H1 (cell line): ENCODE measurements at regions of chr18 and their contacts with region 1.

Region 1: DNA sequence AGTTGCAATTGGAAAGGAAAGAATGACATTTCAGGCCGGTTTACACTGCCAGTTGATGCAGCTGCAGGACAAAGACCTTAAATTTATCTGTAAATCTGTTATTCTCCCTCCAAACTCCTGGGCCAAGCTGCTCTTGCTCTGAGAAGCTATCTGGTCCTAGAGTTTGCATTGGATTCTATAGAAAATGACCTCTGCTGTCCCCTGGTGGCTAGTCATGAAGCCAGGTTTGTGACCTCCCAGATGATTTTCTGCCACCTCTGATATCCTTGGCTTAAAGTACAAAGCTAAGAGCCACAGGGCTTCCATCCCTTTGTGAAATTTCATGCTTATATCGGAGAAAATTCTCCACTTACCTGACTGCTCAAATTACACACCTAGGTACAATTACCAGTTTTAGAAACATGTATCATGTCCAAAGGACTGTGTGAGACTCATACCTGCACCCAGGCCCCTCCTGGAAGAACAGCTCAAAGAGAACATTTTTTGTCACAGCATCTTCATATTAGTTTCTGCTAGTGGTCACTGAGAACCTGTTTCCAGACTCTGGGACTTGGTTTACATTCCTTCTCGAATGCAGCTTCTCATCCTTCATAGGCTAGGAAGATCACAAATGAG is 28.9 kb upstream of the IER3IP1 start:
- DNase-seq: peak in 1 of 2 experiments; percentile 66
- H3K4me3 ChIP-seq: no peak overlapping the region
- H3K27ac ChIP-seq: no peak overlapping the region
- H3K4me1 ChIP-seq: peaks cover 0 to 4% (median 0%) of the 10 kb centered on the region in 4 experiments; a peak in 3 of 7 replicates
- H3K27me3 ChIP-seq: no peaks in the 10 kb centered on the region
- CTCF ChIP-seq: peak; percentile 47 to 91 (median 85)
- EP300 ChIP-seq: no peak
- POLR2A ChIP-seq: no peak
- RAD21 ChIP-seq: peak; percentile 80 to 84

Region 2: GRCh38 chr18:47087676-47088075 is 117.3 kb before region 1 on chr18:
- CTCF ChIA-PET with region 1: interaction called, 13 read pairs
- POLR2A ChIA-PET with region 1: no interaction called
- DNase-seq: no peak
- H3K4me3 ChIP-seq: no peak overlapping the region
- H3K27ac ChIP-seq: no peak overlapping the region
- H3K4me1 ChIP-seq: peaks cover 0 to 2% (median 0%) of the 10 kb centered on the region in 4 experiments; a peak in 2 of 7 replicates
- H3K27me3 ChIP-seq: no peaks in the 10 kb centered on the region
- CTCF ChIP-seq: no peak
- EP300 ChIP-seq: no peak
- POLR2A ChIP-seq: no peak
- RAD21 ChIP-seq: no peak

Region 3: DNA sequence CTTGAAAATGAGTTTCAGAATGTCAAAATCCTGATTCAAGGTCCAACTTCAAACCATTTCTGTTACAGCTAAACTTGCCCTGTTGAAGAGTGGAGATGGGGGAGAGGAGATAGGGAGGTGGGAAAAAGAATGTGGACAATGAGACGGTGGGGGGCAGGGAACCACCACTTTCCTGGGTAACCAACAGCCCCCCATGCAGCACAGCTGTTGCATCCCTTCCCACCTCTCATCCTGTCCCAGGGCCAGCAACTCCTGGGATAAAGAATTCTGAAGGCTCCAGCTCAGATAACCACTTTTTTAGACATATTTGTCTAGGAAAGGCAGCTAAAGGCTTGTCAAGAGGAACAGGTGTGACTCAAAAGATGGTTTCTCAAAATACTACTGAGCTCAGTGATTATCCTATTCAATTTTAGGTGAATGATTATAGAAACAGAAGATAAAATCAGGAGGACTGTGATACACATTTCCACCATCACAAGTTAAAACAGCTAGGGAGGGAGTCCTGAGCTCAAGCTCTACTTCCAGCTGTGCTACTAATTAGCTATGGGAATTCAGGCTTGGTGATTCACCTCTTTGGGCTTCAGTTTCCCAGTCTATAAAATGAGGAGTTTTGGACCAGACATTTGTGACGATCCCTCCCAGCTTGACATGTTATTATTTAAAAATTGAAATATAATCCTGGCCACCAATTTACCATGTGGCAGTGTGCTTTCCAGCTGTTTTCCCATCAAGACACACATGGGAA is 91.0 kb before region 1 on chr18:
- CTCF ChIA-PET with region 1: interaction called, 27 read pairs
- POLR2A ChIA-PET with region 1: no interaction called
- DNase-seq: no peak
- H3K4me3 ChIP-seq: no peak overlapping the region
- H3K27ac ChIP-seq: no peak overlapping the region
- H3K4me1 ChIP-seq: peaks cover 5 to 23% (median 12%) of the 10 kb centered on the region in 4 experiments
- H3K27me3 ChIP-seq: no peaks in the 10 kb centered on the region
- CTCF ChIP-seq: no peak
- EP300 ChIP-seq: no peak
- POLR2A ChIP-seq: no peak
- RAD21 ChIP-seq: no peak

Region 4: DNA sequence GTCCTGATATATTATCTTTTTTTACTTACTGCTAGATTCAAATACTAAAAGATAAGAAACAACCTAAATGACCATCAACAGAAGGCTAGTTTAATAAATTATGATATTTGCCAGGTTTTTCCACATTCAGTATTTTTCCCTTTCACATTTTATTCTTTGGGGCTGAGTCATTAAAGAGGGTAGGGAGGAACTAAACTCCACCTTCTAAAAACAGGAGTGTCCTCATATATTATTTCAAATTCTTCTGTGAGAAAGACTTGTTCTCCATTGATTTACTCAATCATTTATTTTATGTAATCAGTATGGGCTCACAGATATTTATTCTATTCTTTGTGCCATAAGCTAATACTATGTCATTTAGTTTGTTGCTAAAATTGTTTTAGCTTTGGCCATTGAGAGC is 63.7 kb before region 1 on chr18:
- CTCF ChIA-PET with region 1: no interaction called
- POLR2A ChIA-PET with region 1: no interaction called
- DNase-seq: no peak
- H3K4me3 ChIP-seq: no peak overlapping the region
- H3K27ac ChIP-seq: no peak overlapping the region
- H3K4me1 ChIP-seq: no peaks in the 10 kb centered on the region
- H3K27me3 ChIP-seq: no peaks in the 10 kb centered on the region
- CTCF ChIP-seq: no peak
- EP300 ChIP-seq: no peak
- POLR2A ChIP-seq: no peak
- RAD21 ChIP-seq: no peak

Region 5: DNA sequence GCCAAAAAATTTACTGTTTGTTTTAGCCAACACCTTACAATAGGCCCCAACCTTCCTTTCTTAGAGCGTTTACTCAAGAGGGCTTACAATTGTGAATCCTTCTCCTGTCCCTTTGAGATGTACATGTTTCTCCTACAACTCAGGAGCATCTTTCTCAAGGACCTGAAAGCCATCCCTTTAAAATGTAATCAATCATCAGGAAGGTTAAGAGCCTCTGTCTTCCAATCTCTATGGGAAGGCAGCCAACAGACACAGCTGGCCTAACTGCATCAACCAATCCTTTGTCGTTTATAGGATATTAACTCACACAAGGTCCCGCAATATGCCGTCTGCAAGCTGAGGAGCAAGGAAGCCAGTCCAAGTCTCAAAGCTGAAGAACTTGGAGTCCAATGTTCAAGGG is 25.4 kb before region 1 on chr18:
- CTCF ChIA-PET with region 1: interaction called, 20 read pairs
- POLR2A ChIA-PET with region 1: no interaction called
- DNase-seq: no peak
- H3K4me3 ChIP-seq: no peak overlapping the region
- H3K27ac ChIP-seq: no peak overlapping the region
- H3K4me1 ChIP-seq: peaks cover 2 to 5% (median 4%) of the 10 kb centered on the region in 4 experiments; a peak in 5 of 7 replicates
- H3K27me3 ChIP-seq: no peaks in the 10 kb centered on the region
- CTCF ChIP-seq: no peak
- EP300 ChIP-seq: no peak
- POLR2A ChIP-seq: no peak
- RAD21 ChIP-seq: no peak

Region 6: DNA sequence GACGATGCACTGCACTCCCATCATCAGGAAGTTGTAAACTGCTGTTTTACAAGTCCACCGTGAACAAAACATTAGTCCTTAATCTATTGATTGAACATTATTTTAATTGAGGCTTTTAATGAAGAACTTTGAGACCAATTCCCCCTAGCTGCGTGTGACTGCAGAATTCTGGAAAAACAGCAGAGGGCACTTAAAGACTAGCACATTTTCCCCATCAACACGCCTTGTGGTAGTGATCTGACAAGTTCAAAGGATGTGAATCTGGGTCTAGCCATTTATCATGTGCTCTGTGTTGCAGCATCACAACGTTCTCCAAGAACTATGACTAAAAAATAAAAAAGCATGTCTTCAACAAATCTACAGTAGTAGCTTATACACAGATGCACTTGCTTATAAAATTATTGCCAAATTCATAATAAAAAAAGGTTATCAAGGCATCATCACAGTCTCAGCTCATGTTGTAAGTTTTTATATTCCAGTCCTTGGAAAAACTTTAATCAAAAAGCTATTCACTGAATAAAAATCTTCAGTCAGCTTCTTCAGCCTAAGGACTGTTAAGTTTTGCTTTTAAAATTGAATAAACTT is 10.6 kb after region 1 on chr18:
- CTCF ChIA-PET with region 1: interaction called, 30 read pairs
- POLR2A ChIA-PET with region 1: no interaction called
- DNase-seq: no peak
- H3K4me3 ChIP-seq: no peak overlapping the region
- H3K27ac ChIP-seq: no peak overlapping the region
- H3K4me1 ChIP-seq: no peaks in the 10 kb centered on the region
- H3K27me3 ChIP-seq: peaks cover 0 to under 1% (median 0%) of the 10 kb centered on the region in 4 experiments; a peak in 2 of 7 replicates
- CTCF ChIP-seq: peak; percentile 12 to 92 (median 84)
- EP300 ChIP-seq: no peak
- POLR2A ChIP-seq: no peak
- RAD21 ChIP-seq: peak; percentile 97 to 98